ENCODE measurements at regions of chr1 and their contacts with region 1.

Region 1: DNA sequence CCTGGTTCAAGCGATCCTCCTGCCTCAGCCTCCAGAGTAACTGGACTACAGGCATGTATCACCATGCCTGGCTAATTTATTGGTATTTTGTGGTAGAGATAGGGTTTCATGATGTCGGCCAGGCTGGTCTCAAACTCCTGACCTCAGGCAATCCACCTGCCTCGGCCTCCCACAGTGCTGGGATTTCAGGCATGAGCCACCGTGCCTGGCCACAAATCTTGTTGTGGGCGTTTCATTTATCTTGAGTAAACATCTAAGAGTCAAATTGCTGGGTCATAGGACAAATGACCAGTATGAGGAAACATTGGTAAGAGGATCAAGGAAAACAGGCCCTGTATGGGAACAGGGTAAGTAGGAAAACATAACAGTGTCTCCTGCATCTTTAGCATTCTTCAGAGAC is 17.9 kb downstream of the TMEM200B start:
- DNase-seq: peak; percentile 24
- ATAC-seq: peak; percentile 77; the same call in 1 of the 2 replicates
- H3K4me3 ChIP-seq: no peak overlapping the region
- H3K27ac ChIP-seq: no peak overlapping the region
- H3K4me1 ChIP-seq: 0 out of 2 replicates have a peak, but pooled peaks cover 3% of the 10 kb centered on the region
- H3K27me3 ChIP-seq: no peaks in the 10 kb centered on the region
- CTCF ChIP-seq: no peak

Region 2: DNA sequence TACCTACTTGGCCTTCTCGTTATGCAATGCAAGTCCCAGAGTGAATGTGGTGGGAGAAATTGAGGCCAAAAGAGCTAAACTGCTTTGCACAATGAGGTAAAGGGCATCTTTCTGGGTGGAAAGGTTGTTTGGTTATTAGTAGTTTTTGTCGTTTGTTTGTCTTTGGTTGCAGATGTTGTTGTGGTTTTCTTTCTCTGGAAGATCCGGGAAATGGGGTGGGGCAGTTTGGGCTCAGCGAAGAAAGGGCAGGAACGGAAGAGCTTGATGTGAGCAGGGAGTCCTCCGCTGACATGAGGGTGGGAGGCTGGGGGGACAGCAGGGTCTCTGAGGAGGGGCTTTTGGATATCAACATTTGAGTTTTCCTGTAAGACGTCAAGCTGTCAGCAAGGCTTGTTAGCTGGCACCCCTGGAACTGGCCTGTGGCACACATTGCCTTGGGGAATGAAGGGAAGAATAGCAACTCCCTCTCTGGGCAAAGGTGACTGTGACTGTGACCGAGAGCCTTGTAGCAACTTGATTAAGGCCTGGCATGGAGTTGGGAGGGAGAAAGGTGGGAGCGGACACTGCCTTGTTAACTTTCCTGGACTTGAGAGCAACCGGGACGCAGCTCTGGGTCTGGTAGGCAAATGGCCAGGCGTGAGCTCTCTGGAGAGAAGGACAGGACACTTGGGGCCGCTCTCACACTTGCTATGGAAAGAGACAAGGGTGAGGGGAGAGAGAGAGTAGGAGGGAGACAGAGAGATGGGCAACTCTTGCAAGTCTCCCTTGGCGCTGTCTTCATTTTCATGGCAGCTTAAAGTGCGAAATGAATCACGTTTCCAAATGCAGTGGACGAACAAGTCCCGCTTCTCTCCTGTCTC is 309.3 kb before region 1 on chr1:
- CTCF ChIA-PET with region 1: no interaction called
- POLR2A ChIA-PET with region 1: no interaction called
- in situ Hi-C with region 1: no loop called
- intact Hi-C with region 1: no loop called
- DNase-seq: no peak
- ATAC-seq: peak; percentile 65; the same call in 1 of the 2 replicates
- H3K4me3 ChIP-seq: no peak overlapping the region
- H3K27ac ChIP-seq: no peak overlapping the region
- H3K4me1 ChIP-seq: peaks cover 6% of the 10 kb centered on the region
- H3K27me3 ChIP-seq: no peaks in the 10 kb centered on the region
- CTCF ChIP-seq: no peak

Region 3: DNA sequence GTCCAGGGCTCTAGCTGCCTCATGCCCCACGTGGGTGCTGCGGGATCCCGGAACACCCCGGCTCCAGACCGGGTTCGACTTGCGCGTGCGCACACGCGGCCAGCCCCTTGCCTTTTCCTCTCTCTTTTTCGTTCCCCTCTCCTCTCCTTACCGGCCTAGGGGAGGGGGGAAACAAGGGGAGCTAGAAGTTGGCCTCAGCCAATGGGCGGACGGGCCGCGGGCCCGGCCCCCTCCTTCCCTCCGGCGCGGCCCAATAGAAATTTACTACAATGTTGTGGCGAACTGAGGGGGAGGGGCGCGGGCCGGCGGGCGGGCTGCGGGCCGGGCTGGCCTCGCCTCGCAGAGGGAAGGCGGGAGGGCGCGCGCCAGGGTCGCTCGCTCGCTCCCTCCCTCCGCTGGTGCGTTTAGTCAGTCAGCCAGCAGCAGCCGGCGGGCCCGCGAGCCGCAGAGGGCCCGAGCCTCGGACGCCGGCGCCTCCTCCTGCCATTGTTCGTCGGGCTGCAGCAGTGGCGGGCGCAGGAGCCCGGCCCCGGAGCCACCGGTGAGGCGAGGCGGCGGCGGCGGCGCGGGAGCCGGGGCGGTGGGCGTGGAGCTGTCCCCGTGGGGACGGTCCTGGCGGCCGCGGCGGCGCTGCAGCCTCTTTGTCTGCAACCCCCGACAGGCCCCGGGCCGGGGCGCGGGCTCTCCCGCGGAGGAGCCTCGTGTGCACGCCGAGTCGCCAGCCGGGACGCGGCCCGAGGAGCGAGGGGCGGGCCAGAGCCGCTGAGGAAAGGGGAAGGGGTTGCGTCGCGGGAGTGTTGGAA is 191.4 kb before region 1 on chr1 and contains the start of gene EPB41:
- CTCF ChIA-PET with region 1: interaction called, 10 read pairs
- POLR2A ChIA-PET with region 1: no interaction called
- in situ Hi-C with region 1: no loop called
- intact Hi-C with region 1: no loop called
- DNase-seq: no peak
- ATAC-seq: peak; percentile 96
- H3K4me3 ChIP-seq: peak within 1 kb of the TSS; percentile 54 to 80
- H3K27ac ChIP-seq: peak within 1 kb of the TSS; percentile 76
- H3K4me1 ChIP-seq: peaks cover 4% of the 10 kb centered on the region; the same call in 1 of the 2 replicates
- H3K27me3 ChIP-seq: no peaks in the 10 kb centered on the region
- CTCF ChIP-seq: no peak
- total RNA-seq, gene EPB41: 20.2 TPM

Region 4: DNA sequence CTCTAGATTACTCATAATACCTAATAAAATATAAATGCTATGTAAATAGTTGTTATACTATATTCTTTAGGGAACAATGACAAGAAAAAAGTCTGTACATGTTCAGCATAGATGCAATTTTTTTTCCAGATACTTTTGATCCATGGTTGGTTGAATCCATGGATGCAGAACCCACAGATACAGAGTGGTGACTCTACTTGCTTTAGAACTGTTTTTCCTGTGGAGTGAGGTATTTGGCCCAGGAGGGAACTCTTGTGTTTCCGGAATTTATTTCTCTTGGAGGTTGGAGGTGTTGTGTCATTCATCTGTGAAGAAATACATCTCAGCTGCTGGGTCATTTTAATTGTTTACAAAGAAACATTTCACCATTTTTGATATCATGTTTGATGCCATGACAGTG is 10.9 kb before region 1 on chr1:
- CTCF ChIA-PET with region 1: interaction called, 14 read pairs
- POLR2A ChIA-PET with region 1: interaction called, 9 read pairs
- in situ Hi-C with region 1: no loop called
- intact Hi-C with region 1: no loop called
- DNase-seq: no peak
- ATAC-seq: no peak
- H3K4me3 ChIP-seq: no peak overlapping the region
- H3K27ac ChIP-seq: no peak overlapping the region
- H3K4me1 ChIP-seq: no peaks in the 10 kb centered on the region
- H3K27me3 ChIP-seq: no peaks in the 10 kb centered on the region
- CTCF ChIP-seq: no peak

Region 5: GRCh38 chr1:29124366-29125236 is 18.8 kb after region 1 on chr1:
- CTCF ChIA-PET with region 1: no interaction called
- POLR2A ChIA-PET with region 1: interaction called, 17 read pairs
- in situ Hi-C with region 1: no loop called
- intact Hi-C with region 1: no loop called
- DNase-seq: no peak
- ATAC-seq: peak; percentile 74
- H3K4me3 ChIP-seq: peak overlapping the region; percentile 62 to 74
- H3K27ac ChIP-seq: peak overlapping the region; percentile 72
- H3K4me1 ChIP-seq: no peaks in the 10 kb centered on the region; the same call in 1 of the 2 replicates
- H3K27me3 ChIP-seq: no peaks in the 10 kb centered on the region; the same call in 1 of the 2 replicates
- CTCF ChIP-seq: no peak